Breast epithelium (tissue), 4 donors: ENCODE measurements at regions of chr10 and their contacts with region 1.

Region 1: DNA sequence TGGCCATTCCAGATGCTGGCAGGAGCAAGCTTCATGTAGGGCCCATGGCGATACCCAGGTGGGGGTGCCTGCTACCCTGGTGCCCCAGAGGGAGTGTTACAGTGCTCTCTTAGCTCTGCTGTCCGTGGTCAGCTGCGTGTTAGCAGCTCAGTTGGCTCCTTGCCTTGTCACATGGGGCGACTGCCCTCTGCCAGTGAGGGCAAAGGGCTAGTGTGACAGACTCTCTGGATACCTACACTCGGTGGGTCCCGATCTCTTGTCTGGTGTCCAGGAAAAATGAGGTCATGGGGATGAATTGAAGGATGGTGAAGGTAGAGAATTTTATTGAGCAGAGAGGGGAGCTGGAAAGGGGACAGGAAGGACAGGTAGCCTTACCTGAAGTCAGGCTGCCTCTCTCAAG is 152.2 kb downstream of the CYP26A1 start:
- DNase-seq: no peak
- H3K4me3 ChIP-seq: no peak overlapping the region
- H3K27ac ChIP-seq: peak overlapping the region; percentile 7 to 52
- H3K4me1 ChIP-seq: no peaks in the 10 kb centered on the region
- H3K27me3 ChIP-seq: no peaks in the 10 kb centered on the region
- CTCF ChIP-seq: no peak
- POLR2A ChIP-seq: no peak

Region 2: GRCh38 chr10:91294134-91294906 is 1931.6 kb before region 1 on chr10:
- intact Hi-C with region 1: loop called (anchors 5 kb)
- DNase-seq: no peak
- H3K4me3 ChIP-seq: no peak overlapping the region
- H3K27ac ChIP-seq: no peak overlapping the region
- H3K4me1 ChIP-seq: no peaks in the 10 kb centered on the region
- H3K27me3 ChIP-seq: no peaks in the 10 kb centered on the region
- CTCF ChIP-seq: no peak
- POLR2A ChIP-seq: no peak